Activated naive CD8-positive, alpha-beta T cell treated with anti-CD3 and anti-CD28 coated beads, Interleukin-2, amount 10 ng/mL, durations not matched to agents 7 days and 5 days (primary cell): ENCODE measurements at regions of chr14 and their contacts with region 1.

Region 1: DNA sequence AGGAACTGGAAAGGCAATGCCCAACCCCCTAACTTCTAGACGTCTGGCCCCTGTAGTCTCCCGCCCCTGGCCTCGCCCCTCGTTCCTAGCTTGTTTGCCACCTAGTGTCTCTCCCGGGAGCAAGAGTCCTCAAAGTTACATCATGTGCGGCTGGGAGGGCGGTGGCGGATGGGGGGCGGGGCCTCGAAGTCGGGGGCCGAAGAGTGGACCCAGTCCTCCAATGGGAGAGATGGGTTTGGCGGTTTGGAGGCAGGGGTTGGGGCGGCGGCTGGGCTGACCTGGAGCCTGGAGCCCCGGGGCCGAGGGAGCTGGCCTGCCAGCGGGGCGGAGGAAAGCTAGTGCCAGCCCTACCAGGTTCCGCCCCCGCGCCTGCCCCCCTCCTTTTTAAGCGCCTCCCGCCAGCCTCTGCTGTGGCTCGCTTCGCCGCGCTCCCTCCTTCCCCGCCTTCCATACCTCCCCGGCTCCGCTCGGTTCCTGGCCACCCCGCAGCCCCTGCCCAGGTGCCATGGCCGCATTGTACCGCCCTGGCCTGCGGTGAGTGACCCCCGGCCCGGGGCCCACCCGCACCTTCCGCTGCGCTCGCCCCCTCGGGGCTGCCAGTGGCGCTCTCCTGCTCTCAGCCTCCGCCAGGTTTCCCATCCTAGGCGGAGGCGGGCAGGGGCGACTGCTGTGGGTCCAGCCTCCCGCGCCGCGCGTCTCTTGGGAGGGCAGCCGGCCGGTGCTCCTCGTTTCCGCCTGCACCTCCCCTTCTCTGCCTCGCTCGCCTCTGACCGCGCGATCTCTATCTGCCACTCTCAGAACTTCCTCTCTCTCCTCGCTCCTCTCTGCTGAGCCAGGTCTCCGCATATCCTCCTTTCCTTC is at the start of gene PCK2:
- DNase-seq: peak; percentile 83
- ATAC-seq: peak; percentile 77
- H3K4me3 Mint-ChIP-seq: peak within 1 kb of the TSS; percentile 95
- H3K27ac Mint-ChIP-seq: peak within 1 kb of the TSS; percentile 97
- H3K4me1 Mint-ChIP-seq: peaks cover 29% of the 10 kb centered on the region
- H3K27me3 Mint-ChIP-seq: no peaks in the 10 kb centered on the region
- total RNA-seq, gene PCK2: 47.4 to 50.6 TPM

Region 2: DNA sequence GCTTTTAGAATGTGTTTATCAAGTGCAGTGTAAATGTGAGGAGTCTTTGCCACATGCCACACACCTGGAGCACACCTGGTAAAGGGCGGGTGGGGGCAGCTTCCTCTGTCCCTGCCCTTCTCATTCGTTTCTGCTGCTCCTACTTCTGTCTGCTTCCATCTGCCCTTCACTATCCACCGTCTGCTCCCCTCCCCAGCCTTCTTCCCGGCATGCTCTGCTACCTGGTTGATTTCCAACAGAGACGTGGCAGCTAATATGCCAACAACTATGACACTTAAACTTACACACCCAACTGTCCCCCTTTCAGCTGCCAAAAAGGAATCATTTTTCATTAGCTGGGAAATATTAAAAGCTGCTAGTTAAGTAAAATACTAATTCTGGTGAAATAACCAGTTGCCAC is 51.4 kb before region 1 on chr14:
- POLR2A ChIA-PET with region 1: no interaction called
- DNase-seq: no peak
- ATAC-seq: no peak
- H3K4me3 Mint-ChIP-seq: no peak overlapping the region
- H3K27ac Mint-ChIP-seq: no peak overlapping the region
- H3K4me1 Mint-ChIP-seq: peaks cover 17% of the 10 kb centered on the region
- H3K27me3 Mint-ChIP-seq: peaks cover 29% of the 10 kb centered on the region

Region 3: DNA sequence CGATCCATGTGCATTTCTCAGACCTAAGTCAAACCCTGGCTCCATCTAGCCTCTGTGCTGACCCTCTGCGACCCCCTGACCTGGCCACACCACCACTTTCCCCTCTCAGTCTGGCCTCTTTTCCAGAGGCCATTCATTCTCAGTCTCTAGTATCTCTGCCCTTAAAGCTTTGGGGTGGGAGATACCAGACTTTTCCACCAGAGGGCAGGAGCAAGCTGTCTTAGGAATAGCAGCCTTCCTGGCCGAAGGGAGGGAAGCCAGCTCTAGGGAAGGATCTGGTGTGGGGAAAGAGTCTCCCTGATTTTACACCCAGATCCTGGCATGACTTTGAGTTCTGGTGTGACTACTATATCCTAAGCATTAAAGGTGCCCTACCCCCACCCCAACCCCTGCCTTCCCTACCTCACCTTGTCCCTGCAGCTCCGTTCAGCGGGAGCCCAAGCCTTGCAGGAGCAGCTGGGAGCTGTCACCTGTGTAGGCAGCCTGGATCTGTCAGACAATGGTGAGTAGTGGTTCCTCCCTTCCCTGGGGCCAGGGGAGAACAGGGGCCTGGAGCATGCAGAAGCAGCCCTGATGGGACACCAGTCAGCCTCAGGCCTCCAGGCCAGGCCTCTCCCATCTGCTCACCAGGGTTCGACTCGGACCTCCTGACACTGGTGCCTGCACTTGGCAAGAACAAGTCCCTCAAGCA is 35.7 kb before region 1 on chr14:
- POLR2A ChIA-PET with region 1: interaction called, 13 read pairs
- DNase-seq: no peak
- ATAC-seq: peak; percentile 63
- H3K4me3 Mint-ChIP-seq: no peak overlapping the region
- H3K27ac Mint-ChIP-seq: peak overlapping the region; percentile 78
- H3K4me1 Mint-ChIP-seq: peaks cover 2% of the 10 kb centered on the region
- H3K27me3 Mint-ChIP-seq: peaks cover 2% of the 10 kb centered on the region

Region 4: DNA sequence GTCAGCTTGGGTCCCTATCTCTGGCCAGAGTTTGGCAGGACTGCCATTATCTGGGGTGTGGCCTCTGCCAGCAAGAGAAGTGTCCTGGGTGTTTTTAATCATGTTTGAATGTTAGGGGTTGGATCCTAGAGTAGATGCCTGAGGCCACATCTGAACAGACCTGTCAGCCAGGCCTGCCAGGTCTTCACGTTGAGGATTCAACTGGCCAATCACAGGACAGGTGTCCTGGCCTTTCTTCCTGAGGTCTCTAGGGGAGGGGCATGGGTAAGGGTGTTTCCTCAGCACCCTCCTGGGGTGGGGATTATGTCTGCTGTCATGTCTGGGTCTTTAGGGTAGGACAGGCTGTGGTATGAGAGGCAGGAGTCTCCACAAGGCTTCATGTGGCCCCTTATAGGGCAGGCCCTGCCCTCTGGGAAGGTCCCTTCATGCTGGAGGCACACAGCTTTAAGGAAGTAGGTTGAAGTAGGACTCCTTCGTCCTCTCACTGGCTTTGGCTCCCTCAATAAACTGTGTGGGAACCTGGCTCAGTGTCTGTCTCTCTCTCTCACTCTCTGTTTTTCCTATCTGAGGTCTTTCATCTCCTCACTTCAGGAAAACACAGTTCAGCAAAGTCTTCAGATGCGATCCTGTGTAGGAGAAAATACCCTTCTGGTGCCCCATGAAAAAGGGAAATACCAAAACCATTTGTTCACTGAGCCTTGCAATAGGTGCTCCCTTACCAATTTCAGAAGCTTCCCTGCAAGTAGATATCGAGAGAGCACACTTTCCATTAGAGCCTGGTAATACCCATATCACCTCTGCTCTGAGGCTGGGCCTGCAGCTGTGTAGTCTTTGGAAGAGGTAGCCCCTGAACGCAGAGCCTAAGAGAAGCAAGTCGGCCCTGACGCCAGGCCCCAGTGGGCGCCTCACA is 29.6 kb after region 1 on chr14:
- POLR2A ChIA-PET with region 1: no interaction called
- DNase-seq: no peak
- ATAC-seq: no peak
- H3K4me3 Mint-ChIP-seq: no peak overlapping the region
- H3K27ac Mint-ChIP-seq: peak overlapping the region; percentile 19
- H3K4me1 Mint-ChIP-seq: peaks cover 5% of the 10 kb centered on the region
- H3K27me3 Mint-ChIP-seq: no peaks in the 10 kb centered on the region

Region 5: GRCh38 chr14:24135834-24136542 is 41.9 kb after region 1 on chr14 and contains the start of gene PSME1:
- POLR2A ChIA-PET with region 1: interaction called, 13 read pairs
- DNase-seq: peak; percentile 97
- ATAC-seq: peak; percentile 87
- H3K4me3 Mint-ChIP-seq: peak within 1 kb of the TSS; percentile 96
- H3K27ac Mint-ChIP-seq: peak within 1 kb of the TSS; percentile 94
- H3K4me1 Mint-ChIP-seq: peaks cover 51% of the 10 kb centered on the region
- H3K27me3 Mint-ChIP-seq: no peaks in the 10 kb centered on the region
- total RNA-seq, gene PSME1: 430 to 443 TPM

Region 6: GRCh38 chr14:24146978-24147760 is 53.0 kb after region 1 on chr14 and contains the start of gene RNF31:
- POLR2A ChIA-PET with region 1: interaction called, 37 read pairs
- DNase-seq: peak; percentile 95
- ATAC-seq: peak; percentile 82
- H3K4me3 Mint-ChIP-seq: peak within 1 kb of the TSS; percentile 94
- H3K27ac Mint-ChIP-seq: peak within 1 kb of the TSS; percentile 96
- H3K4me1 Mint-ChIP-seq: peaks cover 54% of the 10 kb centered on the region
- H3K27me3 Mint-ChIP-seq: no peaks in the 10 kb centered on the region
- total RNA-seq, gene RNF31: 131 to 153 TPM

Region 7: GRCh38 chr14:24259252-24259995 is 165.3 kb after region 1 on chr14:
- POLR2A ChIA-PET with region 1: no interaction called
- DNase-seq: no peak
- ATAC-seq: no peak
- H3K4me3 Mint-ChIP-seq: no peak overlapping the region
- H3K27ac Mint-ChIP-seq: no peak overlapping the region
- H3K4me1 Mint-ChIP-seq: no peaks in the 10 kb centered on the region
- H3K27me3 Mint-ChIP-seq: no peaks in the 10 kb centered on the region